ENCODE measurements at regions of chr13 and their contacts with region 1.

Region 1: GRCh38 chr13:85186356-85187045 is 612.7 kb downstream of the SLITRK6 start:
- DNase-seq: no peak
- ATAC-seq: no peak
- H3K4me3 ChIP-seq: no peak overlapping the region
- H3K27ac ChIP-seq: no peak overlapping the region
- H3K4me1 ChIP-seq: no peaks in the 10 kb centered on the region
- H3K27me3 ChIP-seq: no peaks in the 10 kb centered on the region
- CTCF ChIP-seq: no peak

Region 2: GRCh38 chr13:83211301-83211700 is 1975.2 kb before region 1 on chr13:
- intact Hi-C with region 1: loop called in 1 of 2 experiments (anchors 5 kb)
- DNase-seq: no peak
- ATAC-seq: no peak
- H3K4me3 ChIP-seq: no peak overlapping the region
- H3K27ac ChIP-seq: no peak overlapping the region
- H3K4me1 ChIP-seq: no peaks in the 10 kb centered on the region
- H3K27me3 ChIP-seq: no peaks in the 10 kb centered on the region
- CTCF ChIP-seq: no peak

Measured in psoas muscle (tissue), 8 donors.